WTC11 (cell line): ENCODE measurements at regions of chr2 and their contacts with region 1.

Region 1: DNA sequence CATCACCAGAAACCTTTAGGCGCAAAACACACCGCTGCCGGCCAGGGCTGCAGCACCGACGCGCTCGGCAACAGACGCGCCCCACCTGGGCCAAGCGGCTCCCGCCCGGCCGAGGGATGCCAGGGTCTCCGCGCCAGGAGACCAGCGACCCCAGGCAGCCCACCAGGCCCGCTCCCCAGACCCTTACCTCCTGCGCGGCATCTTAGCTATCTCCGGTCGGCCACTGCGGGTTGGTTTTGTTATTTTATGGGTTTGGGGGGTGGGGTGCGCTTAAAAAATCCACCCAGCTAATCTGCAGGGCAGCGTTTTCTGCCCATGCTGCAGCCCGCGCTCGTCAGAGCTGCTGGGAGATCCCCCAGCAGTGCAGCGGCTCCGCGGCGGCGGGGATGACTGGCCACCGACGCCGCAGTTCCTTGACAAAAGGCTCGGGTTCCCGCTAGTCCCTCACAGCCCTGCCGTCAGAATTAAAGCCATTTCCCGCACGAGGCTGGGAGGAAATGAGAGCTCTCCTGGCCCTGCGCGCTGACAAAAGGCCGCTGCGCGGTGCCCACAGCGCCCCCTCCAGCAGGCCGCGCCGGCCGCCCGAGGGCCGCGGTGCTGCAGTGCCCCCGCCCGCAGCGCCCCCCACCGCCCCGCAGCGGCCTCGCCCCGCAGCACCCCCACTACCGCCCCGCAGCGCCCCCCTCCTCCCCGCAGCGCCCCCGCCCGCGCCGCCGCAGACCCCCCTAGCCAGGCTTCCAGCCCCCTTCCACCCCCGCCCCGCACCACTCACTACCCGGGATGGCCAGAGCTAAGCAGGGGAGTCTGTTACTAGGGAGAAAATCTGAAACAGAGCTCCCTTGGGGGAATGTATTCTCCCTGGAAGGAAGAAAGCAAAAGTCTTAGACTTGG is at the start of gene ADD2:
- DNase-seq: peak; percentile 74
- ATAC-seq: peak; percentile 69
- H3K4me3 Mint-ChIP-seq: peak within 1 kb of the TSS; percentile 91
- H3K27ac Mint-ChIP-seq: peak within 1 kb of the TSS; percentile 96
- H3K4me1 Mint-ChIP-seq: peaks cover 49% of the 10 kb centered on the region
- H3K27me3 Mint-ChIP-seq: peaks cover 4% of the 10 kb centered on the region
- CTCF ChIP-seq: 0 out of 2 replicates have a peak, but pooled peaks have one; percentile 25
- total RNA-seq, gene ADD2: 164 to 196 TPM (median 187 TPM) in 3 replicates

Region 2: DNA sequence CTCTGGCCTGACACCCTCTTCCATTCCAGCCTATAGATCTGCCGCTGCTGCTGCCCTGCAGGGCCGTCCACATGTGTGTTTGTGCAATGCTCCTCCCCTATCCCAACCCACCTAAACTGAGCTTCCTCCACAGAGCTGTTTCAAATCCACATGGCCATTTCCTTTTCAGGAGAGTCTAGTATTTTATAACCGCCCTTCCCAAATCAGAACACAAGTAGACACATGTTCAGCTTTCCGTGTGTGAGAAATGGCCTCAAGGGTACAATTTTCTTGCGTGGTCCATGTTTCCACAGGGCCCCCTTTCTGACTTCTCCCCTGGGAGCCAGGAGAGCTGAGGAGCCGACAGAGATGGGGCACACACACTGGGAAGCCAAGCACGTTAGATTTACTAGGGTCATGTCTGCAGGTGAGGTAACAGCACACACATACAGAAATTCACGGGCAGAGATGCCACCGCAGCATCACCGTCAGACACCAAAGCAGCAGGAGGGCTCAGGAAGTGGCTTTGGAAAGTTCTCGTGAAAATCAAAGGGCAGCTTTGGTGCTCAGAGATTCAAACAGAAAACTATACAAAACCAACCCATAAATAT is 111.4 kb before region 1 on chr2:
- CTCF ChIA-PET with region 1: interaction called, 15 read pairs
- POLR2A ChIA-PET with region 1: no interaction called
- DNase-seq: no peak
- ATAC-seq: peak; percentile 31
- H3K4me3 Mint-ChIP-seq: no peak overlapping the region
- H3K27ac Mint-ChIP-seq: no peak overlapping the region
- H3K4me1 Mint-ChIP-seq: peaks cover 22% of the 10 kb centered on the region
- H3K27me3 Mint-ChIP-seq: peaks cover 53% of the 10 kb centered on the region
- CTCF ChIP-seq: no peak

Region 3: GRCh38 chr2:70716131-70716743 is 51.7 kb before region 1 on chr2:
- CTCF ChIA-PET with region 1: interaction called, 20 read pairs
- POLR2A ChIA-PET with region 1: interaction called, 3 read pairs
- DNase-seq: no peak
- ATAC-seq: peak; percentile 18
- H3K4me3 Mint-ChIP-seq: no peak overlapping the region
- H3K27ac Mint-ChIP-seq: peak overlapping the region; percentile 19; the same call in 1 of the 2 replicates
- H3K4me1 Mint-ChIP-seq: peaks cover 80% of the 10 kb centered on the region
- H3K27me3 Mint-ChIP-seq: no peaks in the 10 kb centered on the region
- CTCF ChIP-seq: no peak

Region 4: GRCh38 chr2:70733646-70734180 is 34.2 kb before region 1 on chr2:
- CTCF ChIA-PET with region 1: interaction called, 19 read pairs
- POLR2A ChIA-PET with region 1: no interaction called
- DNase-seq: no peak
- ATAC-seq: peak; percentile 41
- H3K4me3 Mint-ChIP-seq: peak overlapping the region; percentile 57
- H3K27ac Mint-ChIP-seq: peak overlapping the region; percentile 96
- H3K4me1 Mint-ChIP-seq: peaks cover 92% of the 10 kb centered on the region
- H3K27me3 Mint-ChIP-seq: no peaks in the 10 kb centered on the region
- CTCF ChIP-seq: no peak

Region 5: GRCh38 chr2:70753902-70754301 is 14.0 kb before region 1 on chr2:
- CTCF ChIA-PET with region 1: interaction called, 15 read pairs
- POLR2A ChIA-PET with region 1: no interaction called
- DNase-seq: no peak
- ATAC-seq: no peak
- H3K4me3 Mint-ChIP-seq: no peak overlapping the region
- H3K27ac Mint-ChIP-seq: no peak overlapping the region
- H3K4me1 Mint-ChIP-seq: peaks cover 52% of the 10 kb centered on the region
- H3K27me3 Mint-ChIP-seq: no peaks in the 10 kb centered on the region
- CTCF ChIP-seq: no peak

Region 6: DNA sequence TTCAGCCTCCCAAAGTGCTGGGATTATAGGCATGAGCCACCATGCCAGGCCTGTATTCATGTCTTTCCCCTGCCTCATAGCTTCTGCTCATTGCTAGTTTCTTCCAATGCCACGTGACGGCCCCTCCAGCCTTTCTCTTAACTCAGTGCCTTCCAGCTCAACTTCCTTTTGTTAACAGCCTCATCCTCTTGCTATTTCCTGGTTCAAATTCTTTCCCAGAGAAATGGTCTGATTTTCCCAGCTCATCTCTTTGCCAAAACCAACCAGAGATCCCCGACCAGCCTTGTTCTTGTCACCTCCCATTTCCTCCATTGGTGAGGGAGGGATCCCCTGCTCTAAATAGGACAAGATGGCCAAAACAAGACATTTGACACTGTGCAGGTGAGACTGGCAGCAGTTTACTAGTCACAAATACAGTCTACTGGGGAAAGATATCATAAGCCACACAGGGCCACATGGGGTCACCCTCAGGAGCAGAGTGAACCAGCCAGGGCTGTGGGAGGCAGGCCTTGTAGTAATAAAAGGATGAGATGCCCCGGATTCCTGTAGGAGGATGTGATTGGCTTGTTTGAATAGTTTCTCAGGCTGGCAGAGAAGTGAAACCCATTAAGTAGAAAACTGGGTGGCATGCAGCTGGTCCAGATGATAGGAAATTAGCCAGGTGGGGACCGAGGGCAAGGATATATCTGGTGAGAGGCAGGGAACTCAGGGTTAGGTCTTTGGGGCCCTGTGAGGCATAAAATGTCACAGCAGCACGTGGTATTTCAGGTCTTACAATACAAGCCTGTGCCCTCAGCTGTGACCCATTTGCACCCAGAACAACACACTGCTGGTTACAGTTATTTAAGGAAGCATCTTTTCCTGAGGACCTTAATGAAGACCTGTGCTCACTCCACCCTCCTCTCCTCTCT is 61.2 kb after region 1 on chr2:
- CTCF ChIA-PET with region 1: no interaction called
- POLR2A ChIA-PET with region 1: no interaction called
- DNase-seq: no peak
- ATAC-seq: no peak
- H3K4me3 Mint-ChIP-seq: no peak overlapping the region
- H3K27ac Mint-ChIP-seq: no peak overlapping the region
- H3K4me1 Mint-ChIP-seq: peaks cover 15% of the 10 kb centered on the region
- H3K27me3 Mint-ChIP-seq: peaks cover 27% of the 10 kb centered on the region
- CTCF ChIP-seq: no peak